ENCODE measurements at regions of chr1 and their contacts with region 1.

Region 1: GRCh38 chr1:109704173-109704572 is 7.9 kb upstream of the GSTM5 start:
- DNase-seq: no peak
- H3K4me3 ChIP-seq: no peak overlapping the region
- CTCF ChIP-seq: no peak

Region 2: DNA sequence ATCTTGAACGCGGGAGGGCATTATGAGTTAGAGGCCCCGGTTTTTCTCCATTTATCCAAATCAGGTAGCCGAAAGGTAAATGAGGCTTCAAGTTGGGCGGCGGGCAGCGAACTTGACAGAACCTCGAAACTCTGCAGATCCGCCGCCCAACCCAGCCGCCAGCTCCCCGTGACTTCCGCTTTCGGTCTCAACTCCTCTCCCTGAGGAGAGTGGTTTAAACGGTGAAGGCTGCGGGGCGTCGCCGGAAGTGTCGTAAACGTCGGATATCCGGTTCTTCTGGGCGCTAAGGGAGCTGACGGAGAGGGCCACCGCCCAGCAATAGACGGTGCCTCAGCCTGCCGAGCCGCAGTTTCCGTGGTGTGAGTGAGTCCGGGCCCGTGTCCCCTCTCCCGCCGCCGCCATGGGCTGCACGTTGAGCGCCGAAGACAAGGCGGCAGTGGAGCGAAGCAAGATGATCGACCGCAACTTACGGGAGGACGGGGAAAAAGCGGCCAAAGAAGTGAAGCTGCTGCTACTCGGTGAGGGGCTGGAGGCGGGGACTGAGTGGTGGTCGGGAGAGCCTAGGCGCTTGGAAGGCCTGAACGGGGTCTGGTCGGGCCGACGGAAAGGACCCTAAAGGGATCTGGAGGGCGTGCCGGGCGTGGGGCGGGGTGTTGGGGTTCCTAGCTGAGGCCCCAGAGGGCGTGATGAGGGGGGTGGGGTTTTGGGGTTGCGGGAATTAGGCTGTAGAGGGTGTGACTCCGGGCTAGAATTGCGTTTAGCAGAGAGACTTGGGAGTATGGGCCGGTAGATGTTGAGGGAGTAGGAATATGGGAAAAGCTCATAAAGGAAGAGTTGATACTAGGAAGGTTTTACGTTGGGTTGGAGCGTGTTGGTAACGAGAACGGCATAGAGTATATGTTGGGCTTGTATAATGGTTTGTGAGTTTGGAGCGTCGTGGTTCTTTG is 155.6 kb before region 1 on chr1 and contains the start of gene GNAI3:
- in situ Hi-C with region 1: loop called (anchors 10 kb)
- DNase-seq: peak; percentile 90
- H3K4me3 ChIP-seq: peak within 1 kb of the TSS; percentile 86
- CTCF ChIP-seq: no peak

Region 3: DNA sequence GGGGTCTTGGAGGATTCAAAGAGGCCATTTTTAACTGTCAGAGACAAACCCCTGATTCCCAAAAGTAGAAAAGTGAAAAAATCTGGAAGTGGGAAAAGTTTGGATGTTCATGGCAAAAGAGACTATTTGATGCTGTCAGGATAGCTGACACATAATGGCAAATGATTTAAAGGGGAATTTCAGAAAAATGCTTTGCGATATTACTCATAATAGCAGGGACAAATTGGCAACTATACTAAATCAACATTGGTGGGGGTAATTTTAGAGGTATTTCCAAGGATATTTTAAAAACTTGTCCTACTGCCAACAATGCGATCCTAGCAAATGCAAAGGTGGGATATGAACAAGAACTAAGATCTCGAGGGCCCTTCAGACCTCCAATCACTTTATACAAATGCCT is 53.6 kb before region 1 on chr1:
- in situ Hi-C with region 1: loop called (anchors 5 kb)
- DNase-seq: no peak
- H3K4me3 ChIP-seq: no peak overlapping the region
- CTCF ChIP-seq: no peak

Region 4: GRCh38 chr1:109769335-109770029 is 65.3 kb after region 1 on chr1:
- in situ Hi-C with region 1: loop called (anchors 5 kb)
- DNase-seq: peak; percentile 58
- H3K4me3 ChIP-seq: no peak overlapping the region
- CTCF ChIP-seq: no peak

Measured in astrocyte of the cerebellum (primary cell).